CD4-positive, alpha-beta T cell (primary cell): ENCODE measurements at regions of chr14 and their contacts with region 1.

Region 1: GRCh38 chr14:32202998-32203882 is at the start of gene RNU6-8:
- DNase-seq: peak; percentile 78 to 94 (median 86)
- ATAC-seq: peak; percentile 81
- H3K4me3 ChIP-seq: peak within 1 kb of the TSS; percentile 85
- H3K4me3 Mint-ChIP-seq: peak within 1 kb of the TSS; percentile 93
- H3K27ac ChIP-seq: peak within 1 kb of the TSS; percentile 90 to 98
- H3K27ac Mint-ChIP-seq: peak within 1 kb of the TSS; percentile 100
- H3K4me1 ChIP-seq: peaks cover 26% of the 10 kb centered on the region
- H3K4me1 Mint-ChIP-seq: peaks cover 30% of the 10 kb centered on the region
- H3K27me3 ChIP-seq: no peaks in the 10 kb centered on the region
- H3K27me3 Mint-ChIP-seq: peaks cover 12% of the 10 kb centered on the region
- CTCF ChIP-seq: no peak
- total RNA-seq, gene RNU6-8: not detected

Region 2: GRCh38 chr14:30621940-30622830 is 1581.1 kb before region 1 on chr14 and contains the start of gene SCFD1:
- CTCF ChIA-PET with region 1: no interaction called
- POLR2A ChIA-PET with region 1: no interaction called
- intact Hi-C with region 1: loop called in 1 of 2 experiments (anchors 10 kb)
- DNase-seq: peak; percentile 84 to 95 (median 90)
- ATAC-seq: peak; percentile 98
- H3K4me3 ChIP-seq: peak within 1 kb of the TSS; percentile 76
- H3K4me3 Mint-ChIP-seq: peak within 1 kb of the TSS; percentile 91
- H3K27ac ChIP-seq: peak within 1 kb of the TSS; percentile 63 to 69
- H3K27ac Mint-ChIP-seq: peak within 1 kb of the TSS; percentile 92
- H3K4me1 ChIP-seq: peaks cover 19% of the 10 kb centered on the region
- H3K4me1 Mint-ChIP-seq: peaks cover 47% of the 10 kb centered on the region
- H3K27me3 ChIP-seq: no peaks in the 10 kb centered on the region
- H3K27me3 Mint-ChIP-seq: no peaks in the 10 kb centered on the region
- CTCF ChIP-seq: no peak
- total RNA-seq, gene SCFD1: 59.0 to 63.6 TPM

Region 3: GRCh38 chr14:31420319-31421111 is 782.7 kb before region 1 on chr14 and contains the start of gene HEATR5A:
- CTCF ChIA-PET with region 1: no interaction called
- POLR2A ChIA-PET with region 1: no interaction called
- intact Hi-C with region 1: loop called in 1 of 2 experiments (anchors 10 kb)
- DNase-seq: peak; percentile 83 to 96 (median 93)
- ATAC-seq: peak; percentile 96
- H3K4me3 ChIP-seq: peak within 1 kb of the TSS; percentile 99
- H3K4me3 Mint-ChIP-seq: peak within 1 kb of the TSS; percentile 99
- H3K27ac ChIP-seq: peak within 1 kb of the TSS in 1 of 2 donors; percentile 64
- H3K27ac Mint-ChIP-seq: peak within 1 kb of the TSS; percentile 89
- H3K4me1 ChIP-seq: peaks cover 4% of the 10 kb centered on the region
- H3K4me1 Mint-ChIP-seq: peaks cover 33% of the 10 kb centered on the region
- H3K27me3 ChIP-seq: no peaks in the 10 kb centered on the region
- H3K27me3 Mint-ChIP-seq: no peaks in the 10 kb centered on the region
- CTCF ChIP-seq: peak; percentile 29
- total RNA-seq, gene HEATR5A: 5.2 to 5.5 TPM

Region 4: GRCh38 chr14:31561155-31561846 is 641.9 kb before region 1 on chr14 and contains the start of gene NUBPL:
- CTCF ChIA-PET with region 1: no interaction called
- POLR2A ChIA-PET with region 1: no interaction called
- intact Hi-C with region 1: loop called (anchors 2 to 5 kb)
- DNase-seq: peak; percentile 94 to 99 (median 97)
- ATAC-seq: peak; percentile 91
- H3K4me3 ChIP-seq: peak within 1 kb of the TSS; percentile 84
- H3K4me3 Mint-ChIP-seq: peak within 1 kb of the TSS; percentile 95
- H3K27ac ChIP-seq: peak within 1 kb of the TSS; percentile 80 to 84
- H3K27ac Mint-ChIP-seq: peak within 1 kb of the TSS; percentile 98
- H3K4me1 ChIP-seq: no peaks in the 10 kb centered on the region
- H3K4me1 Mint-ChIP-seq: peaks cover 34% of the 10 kb centered on the region
- H3K27me3 ChIP-seq: no peaks in the 10 kb centered on the region
- H3K27me3 Mint-ChIP-seq: peaks cover 26% of the 10 kb centered on the region
- CTCF ChIP-seq: no peak
- total RNA-seq, gene NUBPL: 7.2 to 8.2 TPM

Region 5: DNA sequence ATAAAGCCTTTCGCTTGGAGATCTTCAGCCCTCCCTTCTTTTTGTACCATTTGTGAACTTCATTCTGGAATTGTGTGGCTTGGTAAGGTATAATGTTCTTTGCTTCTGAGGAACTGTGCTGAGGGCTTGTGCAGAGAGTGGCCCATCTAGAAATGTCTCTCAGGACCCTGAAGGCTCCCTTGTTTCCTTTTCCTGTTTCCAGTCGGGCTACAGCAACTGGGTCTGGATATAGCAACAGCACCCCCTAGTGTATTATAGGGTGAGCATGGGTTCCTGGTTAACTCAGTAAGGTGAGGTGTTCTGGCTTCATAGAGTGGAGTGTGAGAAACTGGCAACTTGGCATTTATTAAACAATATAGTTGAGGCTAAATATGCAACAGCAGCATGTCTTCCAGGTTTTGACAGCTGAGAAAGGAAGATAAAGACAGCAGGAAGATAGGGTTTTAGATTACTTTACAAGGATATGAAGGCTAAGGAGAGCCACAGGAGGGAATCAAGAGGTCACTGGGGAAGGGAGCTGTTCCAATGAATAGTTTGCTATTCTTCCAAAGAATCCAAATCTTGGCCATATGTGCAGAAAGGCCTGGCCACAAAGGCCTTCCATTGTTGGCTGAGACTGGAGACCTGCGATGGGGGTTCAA is 48.9 kb after region 1 on chr14:
- CTCF ChIA-PET with region 1: interaction called, 7 read pairs
- POLR2A ChIA-PET with region 1: no interaction called
- intact Hi-C with region 1: loop called (anchors 5 kb)
- DNase-seq: peak in 13 of 14 experiments; percentile 2 to 80 (median 25)
- ATAC-seq: peak; percentile 94
- H3K4me3 ChIP-seq: no peak overlapping the region
- H3K4me3 Mint-ChIP-seq: no peak overlapping the region
- H3K27ac ChIP-seq: no peak overlapping the region
- H3K27ac Mint-ChIP-seq: no peak overlapping the region
- H3K4me1 ChIP-seq: peaks cover 2% of the 10 kb centered on the region
- H3K4me1 Mint-ChIP-seq: no peaks in the 10 kb centered on the region
- H3K27me3 ChIP-seq: no peaks in the 10 kb centered on the region
- H3K27me3 Mint-ChIP-seq: no peaks in the 10 kb centered on the region
- CTCF ChIP-seq: peak; percentile 92